Right lobe of liver (tissue), 6 donors: ENCODE measurements at regions of chr19 and their contacts with region 1.

Region 1: DNA sequence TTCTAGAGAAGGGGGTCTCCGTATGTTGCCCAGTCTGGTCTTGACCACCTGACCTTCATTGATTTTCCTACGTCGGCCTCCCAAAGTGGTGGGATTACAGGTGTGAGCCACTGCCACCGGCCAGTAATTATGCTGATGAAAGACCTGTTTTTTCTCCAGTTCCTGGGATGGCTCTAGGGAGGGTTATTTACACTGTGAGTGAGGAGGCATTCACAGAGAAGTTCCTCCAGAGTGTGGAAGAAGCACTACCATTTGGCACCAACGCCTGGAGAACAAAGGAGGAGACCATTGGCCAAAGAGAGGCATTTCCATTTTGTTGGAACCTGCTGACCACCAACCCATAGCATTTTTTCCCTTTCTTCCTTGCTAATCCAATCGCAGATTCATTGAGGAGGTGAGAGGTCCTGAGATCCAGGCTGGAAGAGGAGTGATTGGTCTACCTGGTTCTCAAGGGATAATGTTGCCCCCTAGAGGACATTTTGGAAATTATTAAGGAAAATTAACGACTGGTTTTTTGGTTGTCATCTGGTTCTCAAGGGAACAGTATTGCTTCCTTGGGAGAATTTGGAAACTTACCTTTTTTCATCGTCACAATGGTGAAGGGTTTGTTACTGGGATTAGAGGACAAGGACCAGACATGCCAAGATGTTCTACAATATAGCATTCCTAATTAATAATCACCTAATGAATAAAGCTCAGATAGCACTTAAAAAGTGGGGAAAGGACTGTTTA is 5.5 kb upstream of the SAE1 start:
- DNase-seq: no peak
- ATAC-seq: peak; percentile 82 to 94 (median 87)
- H3K4me3 ChIP-seq: no peak overlapping the region
- H3K27ac ChIP-seq: no peak overlapping the region
- H3K4me1 ChIP-seq: no peaks in the 10 kb centered on the region
- H3K27me3 ChIP-seq: no peaks in the 10 kb centered on the region
- CTCF ChIP-seq: peak; percentile 58 to 86 (median 64)
- POLR2A ChIP-seq: no peak

Region 2: DNA sequence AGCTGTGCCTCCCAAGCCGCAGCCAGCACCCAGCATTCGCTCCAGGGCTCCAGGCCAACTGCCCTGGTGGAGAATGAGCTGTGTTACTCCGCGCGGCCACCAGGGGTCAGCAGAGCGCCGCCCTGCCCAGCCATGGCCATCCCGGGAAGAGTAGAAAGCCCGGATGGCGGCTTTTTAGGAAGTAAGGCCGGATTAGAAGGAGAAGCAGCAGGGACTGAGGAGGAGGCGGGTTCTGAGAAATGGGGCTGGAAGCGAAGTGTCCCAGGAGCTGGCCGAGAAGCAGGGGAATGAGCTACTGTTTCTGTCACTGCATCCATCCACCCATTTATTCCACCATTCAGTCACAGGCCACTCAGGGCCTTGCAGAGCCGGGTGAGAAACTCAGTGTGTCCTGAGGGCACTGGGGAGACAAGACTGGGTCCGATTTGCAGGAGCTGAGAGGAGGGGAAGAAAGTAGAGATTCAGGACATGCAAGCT is 112.0 kb before region 1 on chr19:
- intact Hi-C with region 1: no loop called
- DNase-seq: peak; percentile 81 to 88 (median 86)
- ATAC-seq: peak; percentile 99 to 100 (median 100)
- H3K4me3 ChIP-seq: no peak overlapping the region
- H3K27ac ChIP-seq: no peak overlapping the region
- H3K4me1 ChIP-seq: no peaks in the 10 kb centered on the region
- H3K27me3 ChIP-seq: no peaks in the 10 kb centered on the region
- CTCF ChIP-seq: peak; percentile 98 to 99 (median 99)
- POLR2A ChIP-seq: no peak

Region 3: GRCh38 chr19:47075179-47075810 is 49.8 kb before region 1 on chr19:
- intact Hi-C with region 1: loop called (anchors 5 to 10 kb)
- DNase-seq: no peak
- ATAC-seq: peak in 3 of 4 donors; percentile 12 to 33 (median 24)
- H3K4me3 ChIP-seq: no peak overlapping the region
- H3K27ac ChIP-seq: no peak overlapping the region
- H3K4me1 ChIP-seq: peaks cover 0 to 6% (median 3%) of the 10 kb centered on the region in 4 donors
- H3K27me3 ChIP-seq: no peaks in the 10 kb centered on the region
- CTCF ChIP-seq: no peak
- POLR2A ChIP-seq: no peak

Region 4: GRCh38 chr19:47081111-47081510 is 44.0 kb before region 1 on chr19:
- intact Hi-C with region 1: loop called (anchors 5 to 10 kb)
- DNase-seq: no peak
- ATAC-seq: no peak
- H3K4me3 ChIP-seq: no peak overlapping the region
- H3K27ac ChIP-seq: no peak overlapping the region
- H3K4me1 ChIP-seq: peaks cover 0 to 6% (median 3%) of the 10 kb centered on the region in 4 donors
- H3K27me3 ChIP-seq: no peaks in the 10 kb centered on the region
- CTCF ChIP-seq: no peak
- POLR2A ChIP-seq: no peak